Head of caudate nucleus (tissue), 42 donors: ENCODE measurements at regions of chr17 and their contacts with region 1.

Region 1: DNA sequence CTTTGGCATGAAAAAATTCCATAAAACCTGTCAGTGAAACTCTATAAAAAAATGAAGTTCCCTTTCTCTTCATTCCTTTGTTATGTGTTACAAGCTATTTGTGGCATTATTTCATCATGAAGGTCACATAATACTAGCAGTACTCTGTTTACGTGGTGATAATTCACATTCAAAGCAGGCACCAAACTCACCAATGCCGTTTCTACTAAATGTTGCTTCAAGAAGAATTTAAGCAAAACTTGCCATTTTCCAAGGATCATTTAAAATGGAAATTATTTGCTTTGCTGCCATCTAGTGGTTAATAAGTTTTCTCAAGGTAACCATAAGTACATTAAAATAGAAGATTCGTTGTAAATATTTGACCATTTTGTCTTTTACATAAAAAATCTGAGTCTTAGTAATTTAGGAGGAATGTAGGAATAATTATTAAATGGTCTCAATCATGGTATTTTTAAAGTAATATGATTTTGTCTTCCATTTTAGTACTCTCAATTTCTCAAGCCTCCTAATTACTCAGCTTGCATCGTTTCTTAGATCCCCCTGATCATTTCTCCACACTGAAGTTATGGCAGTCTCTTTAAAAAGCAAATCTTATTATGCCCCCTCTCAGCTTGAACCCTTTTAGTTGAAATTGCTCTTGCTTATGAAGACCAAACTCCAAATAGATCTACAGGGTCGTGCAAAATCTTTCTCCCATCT is 80.8 kb downstream of the OMG start:
- DNase-seq: no peak

Region 2: DNA sequence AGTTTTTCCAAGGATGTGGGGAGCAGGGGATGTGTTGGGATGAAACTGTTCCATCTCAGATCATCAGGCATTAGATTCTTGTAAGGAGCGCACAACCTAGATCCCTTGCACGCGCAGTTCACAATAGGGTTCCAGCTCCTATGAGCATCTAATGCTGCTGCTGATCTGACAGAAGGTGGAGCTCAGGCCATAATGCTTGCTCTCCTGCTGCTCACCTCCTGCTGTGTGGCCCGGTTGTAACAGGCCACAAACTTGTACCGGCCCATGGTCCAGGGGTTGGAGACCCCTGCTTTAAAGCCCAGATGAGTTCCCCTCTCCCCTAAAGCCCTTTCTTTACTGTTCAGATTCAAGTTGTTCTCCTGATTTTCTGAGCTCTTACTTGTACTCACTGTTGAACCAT is 200.6 kb before region 1 on chr17:
- intact Hi-C with region 1: loop called (anchors 10 kb)
- DNase-seq: no peak

Region 3: GRCh38 chr17:31094600-31095238 is 121.5 kb before region 1 on chr17 and contains the start of gene NF1:
- intact Hi-C with region 1: loop called (anchors 10 kb)
- DNase-seq: peak; percentile 90 to 98 (median 95)

Region 4: GRCh38 chr17:31248986-31249834 is 33.0 kb after region 1 on chr17:
- intact Hi-C with region 1: no loop called
- DNase-seq: no peak